Endothelial cell of umbilical vein (primary cell): ENCODE measurements at regions of chr18 and their contacts with region 1.

Region 1: DNA sequence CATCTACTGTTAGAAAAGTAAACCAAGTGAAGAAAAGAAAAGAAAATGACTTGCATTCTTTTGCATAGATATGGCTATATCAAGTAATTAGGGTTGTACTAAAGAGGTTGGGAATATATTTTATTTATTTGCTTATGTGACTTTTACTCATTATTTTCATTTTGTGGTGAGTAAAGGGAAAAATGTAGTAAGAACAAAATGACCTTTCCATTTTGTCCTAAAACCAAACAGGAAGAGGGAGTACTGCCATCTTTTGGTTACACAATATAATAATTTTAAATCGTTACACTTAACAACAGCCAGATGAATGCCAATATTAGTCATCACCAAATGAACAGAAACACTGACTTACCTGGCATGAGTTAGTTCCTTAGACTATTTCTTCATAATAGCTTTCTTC is 47.3 kb upstream of the NDUFV2 start:
- DNase-seq: peak; percentile 81
- H3K4me3 ChIP-seq: no peak overlapping the region
- H3K27ac ChIP-seq: no peak overlapping the region
- H3K4me1 ChIP-seq: peaks cover 9% of the 10 kb centered on the region
- H3K27me3 ChIP-seq: no peaks in the 10 kb centered on the region
- CTCF ChIP-seq: no peak
- POLR2A ChIP-seq: no peak

Region 2: DNA sequence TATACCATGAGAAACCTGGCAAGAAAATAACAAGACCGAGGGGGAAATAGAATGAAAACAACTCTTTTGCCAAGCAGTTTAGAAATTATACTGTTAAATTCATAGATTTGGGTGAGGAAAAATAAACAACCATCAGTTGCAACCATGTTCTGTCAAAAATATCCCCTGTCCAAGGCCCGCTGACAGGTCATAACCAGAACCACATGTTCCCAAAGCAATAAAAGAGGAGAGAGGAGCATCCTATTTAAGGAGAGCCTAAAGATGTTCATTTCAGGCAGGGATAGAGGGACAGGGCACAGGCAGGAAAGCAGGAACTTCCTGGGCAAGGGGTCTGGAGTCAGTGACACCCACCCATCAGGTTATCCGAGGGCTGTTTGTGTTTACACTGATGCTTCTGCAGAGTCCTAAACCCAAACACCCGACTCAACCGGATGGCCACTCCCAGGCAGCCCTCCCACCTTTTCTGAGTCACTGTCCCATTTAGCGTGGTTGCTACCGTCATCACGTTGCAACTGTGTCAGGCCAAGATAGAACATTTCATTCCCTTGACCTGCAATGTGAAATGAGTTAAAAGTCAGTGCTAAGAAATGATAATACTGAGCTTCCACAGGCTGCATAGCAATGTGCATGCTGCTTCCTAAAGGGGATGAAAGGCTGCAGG is 914.2 kb before region 1 on chr18:
- CTCF ChIA-PET with region 1: no interaction called
- POLR2A ChIA-PET with region 1: no interaction called
- dilution Hi-C with region 1: no loop called
- intact Hi-C with region 1: no loop called
- DNase-seq: no peak
- H3K4me3 ChIP-seq: no peak overlapping the region
- H3K27ac ChIP-seq: no peak overlapping the region
- H3K4me1 ChIP-seq: peaks cover 5% of the 10 kb centered on the region
- H3K27me3 ChIP-seq: no peaks in the 10 kb centered on the region
- CTCF ChIP-seq: no peak
- POLR2A ChIP-seq: no peak

Region 3: GRCh38 chr18:8882632-8883408 is 172.4 kb before region 1 on chr18:
- CTCF ChIA-PET with region 1: no interaction called
- POLR2A ChIA-PET with region 1: no interaction called
- dilution Hi-C with region 1: no loop called
- intact Hi-C with region 1: loop called (anchors 10 kb)
- DNase-seq: peak; percentile 7
- H3K4me3 ChIP-seq: no peak overlapping the region
- H3K27ac ChIP-seq: no peak overlapping the region
- H3K4me1 ChIP-seq: no peaks in the 10 kb centered on the region
- H3K27me3 ChIP-seq: peaks cover 0 to 1% of the 10 kb centered on the region in 2 experiments
- CTCF ChIP-seq: peak; percentile 5 to 23
- POLR2A ChIP-seq: no peak